ENCODE measurements at regions of chr10 and their contacts with region 1.

Region 1: GRCh38 chr10:114304017-114304570 is 65.0 kb downstream of the VWA2 start:
- DNase-seq: peak; percentile 86
- H3K4me3 ChIP-seq: peak overlapping the region; percentile 65 to 74
- H3K27ac ChIP-seq: peak overlapping the region; percentile 38 to 60; a peak in 3 of 4 replicates
- H3K4me1 ChIP-seq: peaks cover 0 to 11% of the 10 kb centered on the region in 2 experiments; a peak in 1 of 4 replicates
- H3K27me3 ChIP-seq: no peaks in the 10 kb centered on the region
- CTCF ChIP-seq: peak; percentile 80
- EP300 ChIP-seq: no peak
- RAD21 ChIP-seq: peak; percentile 96

Region 2: GRCh38 chr10:113735921-113736320 is 568.2 kb before region 1 on chr10:
- CTCF ChIA-PET with region 1: no interaction called
- POLR2A ChIA-PET with region 1: no interaction called
- DNase-seq: no peak
- H3K4me3 ChIP-seq: no peak overlapping the region
- H3K27ac ChIP-seq: no peak overlapping the region
- H3K4me1 ChIP-seq: no peaks in the 10 kb centered on the region
- H3K27me3 ChIP-seq: no peaks in the 10 kb centered on the region
- CTCF ChIP-seq: no peak
- EP300 ChIP-seq: no peak
- RAD21 ChIP-seq: no peak

Region 3: DNA sequence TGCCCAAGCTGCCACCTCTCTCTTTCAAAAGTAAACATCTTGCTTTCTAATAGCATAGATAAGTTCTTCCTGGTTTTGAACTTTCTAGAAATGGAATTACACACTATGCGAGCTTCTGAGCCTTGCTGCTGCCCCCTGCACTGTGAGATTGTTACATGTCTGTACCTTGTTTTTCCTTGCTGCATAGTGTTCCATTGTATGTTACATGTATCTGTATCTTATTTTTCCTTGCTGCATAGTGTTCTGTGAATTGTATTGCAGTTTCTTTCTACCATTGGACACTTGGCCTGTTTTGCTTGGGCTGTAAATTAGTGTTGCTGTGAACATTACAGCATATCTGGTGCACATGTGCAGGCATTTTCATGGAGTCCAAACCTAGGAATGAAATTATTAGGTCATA is 89.1 kb before region 1 on chr10:
- CTCF ChIA-PET with region 1: no interaction called
- POLR2A ChIA-PET with region 1: no interaction called
- DNase-seq: no peak
- H3K4me3 ChIP-seq: no peak overlapping the region
- H3K27ac ChIP-seq: no peak overlapping the region
- H3K4me1 ChIP-seq: no peaks in the 10 kb centered on the region
- H3K27me3 ChIP-seq: peaks cover 6% of the 10 kb centered on the region; the same call in 1 of the 2 replicates
- CTCF ChIP-seq: no peak
- EP300 ChIP-seq: no peak
- RAD21 ChIP-seq: no peak

Region 4: DNA sequence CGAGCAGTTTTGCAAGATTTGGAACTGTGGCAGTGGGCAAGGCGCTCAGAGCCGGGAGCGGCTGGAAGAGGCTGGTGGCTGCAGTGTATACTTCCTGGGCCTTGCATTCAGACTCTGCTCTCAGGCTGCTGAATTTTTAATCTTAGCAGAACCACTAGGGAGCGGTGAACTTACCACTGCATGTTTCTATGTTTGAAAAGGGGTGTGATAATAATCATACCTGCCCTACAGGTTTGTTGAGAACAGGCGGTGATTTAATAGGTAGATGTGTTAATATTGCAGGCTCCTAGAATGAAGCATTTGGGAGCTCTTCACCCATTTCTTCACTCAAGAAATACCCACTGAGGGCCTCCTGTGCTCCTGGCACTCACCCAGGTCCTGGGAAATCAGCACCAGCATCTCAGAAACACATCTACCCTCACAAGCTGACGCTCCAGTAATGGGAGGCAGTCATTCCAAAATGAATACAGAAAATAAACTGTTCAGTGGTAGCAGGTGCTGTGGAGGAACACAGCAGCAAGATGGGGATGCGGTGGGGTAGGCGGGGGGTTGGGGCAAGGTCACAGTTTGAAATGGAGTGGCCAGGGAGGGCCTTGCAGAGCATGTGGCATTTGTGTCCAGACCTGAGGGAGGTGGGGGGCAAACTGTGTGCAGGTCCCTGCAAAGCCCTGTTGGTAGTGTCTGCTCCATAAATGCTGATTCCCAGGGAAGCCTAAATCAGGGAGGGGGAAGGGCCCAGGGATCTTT is 24.0 kb before region 1 on chr10:
- CTCF ChIA-PET with region 1: interaction called, 23 read pairs
- POLR2A ChIA-PET with region 1: no interaction called
- DNase-seq: no peak
- H3K4me3 ChIP-seq: no peak overlapping the region
- H3K27ac ChIP-seq: no peak overlapping the region
- H3K4me1 ChIP-seq: peaks cover 0 to 7% of the 10 kb centered on the region in 2 experiments; a peak in 1 of 4 replicates
- H3K27me3 ChIP-seq: no peaks in the 10 kb centered on the region; the same call in 1 of the 2 replicates
- CTCF ChIP-seq: no peak
- EP300 ChIP-seq: no peak
- RAD21 ChIP-seq: no peak

Region 5: DNA sequence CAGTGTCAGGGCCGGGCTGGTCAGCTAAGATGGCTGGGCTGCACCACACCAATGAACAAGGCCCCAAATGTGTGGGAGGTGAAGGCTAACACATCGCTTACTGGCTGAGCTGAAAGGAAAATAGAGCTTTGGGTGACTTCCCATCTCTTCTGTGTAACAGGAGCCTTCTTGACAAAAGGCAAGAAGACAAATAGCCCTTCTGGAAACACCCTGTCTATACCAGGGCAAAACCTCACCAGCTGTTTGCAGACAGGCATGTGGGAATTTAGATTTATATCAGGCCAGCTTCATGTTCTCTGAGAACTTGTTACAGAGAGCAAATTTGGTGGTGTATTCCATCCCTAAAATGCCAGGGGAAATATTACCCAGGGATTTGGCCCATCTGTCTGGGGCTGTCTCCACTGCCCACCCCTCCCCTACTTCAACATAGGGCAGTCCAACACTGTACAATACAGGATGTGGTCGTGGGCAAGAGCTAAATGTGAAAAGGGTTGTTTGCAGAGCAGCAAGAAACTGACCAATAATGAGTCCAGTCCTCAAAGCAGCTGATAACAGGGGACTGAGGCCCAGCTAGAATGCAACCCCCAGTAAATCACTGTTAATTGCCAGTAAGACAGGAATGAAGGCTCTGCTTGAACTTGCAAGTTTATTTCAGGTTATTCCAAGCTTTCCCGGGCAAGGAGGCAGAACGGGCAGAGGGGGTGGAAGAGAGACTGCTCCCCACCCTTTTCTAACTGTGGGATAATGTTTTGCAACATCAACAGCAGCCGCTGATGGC is 63.1 kb after region 1 on chr10:
- CTCF ChIA-PET with region 1: interaction called, 15 read pairs
- POLR2A ChIA-PET with region 1: interaction called, 3 read pairs
- DNase-seq: peak; percentile 62
- H3K4me3 ChIP-seq: no peak overlapping the region
- H3K27ac ChIP-seq: peak overlapping the region; percentile 35 to 94; a peak in 3 of 4 replicates
- H3K4me1 ChIP-seq: peaks cover 0 to 16% of the 10 kb centered on the region in 2 experiments; a peak in 1 of 4 replicates
- H3K27me3 ChIP-seq: no peaks in the 10 kb centered on the region
- CTCF ChIP-seq: no peak
- EP300 ChIP-seq: peak in 1 of 2 experiments; percentile 45; a peak in 1 of 4 replicates
- RAD21 ChIP-seq: no peak

Region 6: DNA sequence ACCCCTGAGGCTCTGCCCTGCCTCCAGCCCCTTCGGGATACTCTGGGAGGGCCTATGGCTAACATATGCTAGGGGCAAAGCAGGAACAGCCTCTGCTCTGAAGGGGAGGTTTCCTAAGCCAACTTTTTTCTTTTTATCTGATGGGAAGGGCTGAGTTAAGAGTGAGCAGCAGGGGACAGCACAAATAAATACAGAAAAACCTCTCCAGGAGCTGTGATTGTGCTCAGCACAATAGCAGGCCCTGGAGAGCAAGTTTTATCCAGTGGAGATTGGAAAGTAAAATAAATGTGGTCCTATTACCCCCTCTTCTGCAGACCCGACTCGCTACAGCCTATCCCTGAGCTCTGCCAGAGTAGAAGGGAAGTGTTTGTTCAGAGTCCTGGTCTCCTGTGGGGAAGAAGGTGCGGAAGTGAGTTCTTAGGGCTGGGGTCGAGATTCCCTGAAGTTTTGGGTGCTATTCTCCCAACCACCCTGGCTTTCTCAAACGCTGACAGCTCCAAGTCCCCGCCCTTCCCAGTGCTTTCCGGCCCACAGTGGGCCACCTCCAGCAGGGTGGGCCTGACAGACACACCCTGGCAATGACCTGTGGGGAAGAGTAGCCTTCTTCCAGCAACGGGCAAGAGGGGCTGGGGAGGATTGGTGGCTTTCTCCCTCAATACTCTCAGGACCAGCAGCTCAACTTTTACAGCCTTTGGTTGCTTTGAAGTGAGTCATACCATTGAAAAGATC is 123.2 kb after region 1 on chr10:
- CTCF ChIA-PET with region 1: interaction called, 21 read pairs
- POLR2A ChIA-PET with region 1: no interaction called
- DNase-seq: no peak
- H3K4me3 ChIP-seq: no peak overlapping the region
- H3K27ac ChIP-seq: no peak overlapping the region
- H3K4me1 ChIP-seq: peaks cover 0 to 4% of the 10 kb centered on the region in 2 experiments; a peak in 1 of 4 replicates
- H3K27me3 ChIP-seq: 0 out of 2 replicates have a peak, but pooled peaks cover 4% of the 10 kb centered on the region
- CTCF ChIP-seq: no peak
- EP300 ChIP-seq: no peak
- RAD21 ChIP-seq: peak; percentile 39

Region 7: DNA sequence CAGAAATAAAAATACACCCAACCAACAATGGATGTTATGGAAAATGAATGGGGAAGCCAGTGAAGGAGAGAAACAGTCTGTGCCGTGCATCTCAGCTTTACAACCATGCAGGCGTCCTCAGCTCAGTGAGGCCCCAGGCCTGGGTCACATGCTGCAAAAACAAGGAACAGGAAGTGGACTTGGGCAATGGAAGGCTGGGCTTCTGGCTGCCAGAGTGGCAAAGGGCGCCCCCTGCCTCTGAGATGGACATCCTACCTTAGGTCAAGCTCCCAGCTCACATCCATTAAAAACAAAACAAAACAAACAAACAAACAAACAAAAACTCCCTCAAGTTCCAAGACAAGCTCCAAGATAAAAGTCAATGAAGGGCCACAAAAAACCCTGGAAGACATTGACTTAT is 154.9 kb after region 1 on chr10:
- CTCF ChIA-PET with region 1: interaction called, 54 read pairs
- POLR2A ChIA-PET with region 1: no interaction called
- DNase-seq: peak; percentile 71
- H3K4me3 ChIP-seq: no peak overlapping the region
- H3K27ac ChIP-seq: no peak overlapping the region
- H3K4me1 ChIP-seq: no peaks in the 10 kb centered on the region
- H3K27me3 ChIP-seq: no peaks in the 10 kb centered on the region
- CTCF ChIP-seq: peak; percentile 51
- EP300 ChIP-seq: no peak
- RAD21 ChIP-seq: peak; percentile 65

Region 8: GRCh38 chr10:114526504-114527238 is 222.6 kb after region 1 on chr10:
- CTCF ChIA-PET with region 1: interaction called, 12 read pairs
- POLR2A ChIA-PET with region 1: no interaction called
- DNase-seq: peak; percentile 85
- H3K4me3 ChIP-seq: peak overlapping the region; percentile 42 to 53
- H3K27ac ChIP-seq: peak overlapping the region; percentile 7 to 93; a peak in 3 of 4 replicates
- H3K4me1 ChIP-seq: peaks cover 0 to 22% of the 10 kb centered on the region in 2 experiments; a peak in 2 of 4 replicates
- H3K27me3 ChIP-seq: no peaks in the 10 kb centered on the region
- CTCF ChIP-seq: no peak
- EP300 ChIP-seq: no peak
- RAD21 ChIP-seq: 0 out of 2 replicates have a peak, but pooled peaks have one; percentile 14

Region 9: DNA sequence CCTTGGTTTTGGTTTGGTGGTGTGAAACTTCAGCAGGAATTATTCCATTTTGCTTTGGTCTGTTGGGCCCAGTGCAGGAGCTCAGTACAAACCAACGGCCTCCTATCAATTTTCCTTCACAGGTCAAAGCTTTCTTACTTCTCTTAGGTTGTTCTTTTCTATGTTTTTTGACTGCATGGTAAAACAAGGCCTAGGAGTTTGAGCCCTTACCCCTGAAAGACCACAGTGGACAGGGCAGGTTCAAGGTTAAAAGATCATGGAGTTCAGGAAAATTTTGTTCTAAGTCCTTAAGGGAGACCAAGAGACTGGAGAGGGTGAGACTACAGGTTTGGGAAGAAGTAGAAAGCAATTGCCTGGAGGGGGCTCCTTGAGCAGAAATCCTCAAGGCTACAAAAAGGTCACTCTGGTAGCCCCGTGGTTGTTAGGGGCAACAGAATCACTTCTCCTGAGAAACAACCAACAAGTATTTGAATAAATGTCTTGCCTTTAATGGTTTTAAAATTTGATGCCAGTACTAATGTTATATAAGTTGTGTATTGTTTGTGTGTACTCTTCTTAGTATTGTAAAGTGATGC is 476.6 kb after region 1 on chr10:
- CTCF ChIA-PET with region 1: interaction called, 12 read pairs
- POLR2A ChIA-PET with region 1: no interaction called
- DNase-seq: no peak
- H3K4me3 ChIP-seq: no peak overlapping the region
- H3K27ac ChIP-seq: peak overlapping the region; percentile 58 to 94; a peak in 3 of 4 replicates
- H3K4me1 ChIP-seq: peaks cover 3 to 15% of the 10 kb centered on the region in 2 experiments; a peak in 3 of 4 replicates
- H3K27me3 ChIP-seq: no peaks in the 10 kb centered on the region
- CTCF ChIP-seq: peak; percentile 15; the same call in 1 of the 2 replicates
- EP300 ChIP-seq: no peak
- RAD21 ChIP-seq: no peak

Measured in SK-N-SH (cell line).